ENCODE measurements at regions of chr18 and their contacts with region 1.

Region 1: DNA sequence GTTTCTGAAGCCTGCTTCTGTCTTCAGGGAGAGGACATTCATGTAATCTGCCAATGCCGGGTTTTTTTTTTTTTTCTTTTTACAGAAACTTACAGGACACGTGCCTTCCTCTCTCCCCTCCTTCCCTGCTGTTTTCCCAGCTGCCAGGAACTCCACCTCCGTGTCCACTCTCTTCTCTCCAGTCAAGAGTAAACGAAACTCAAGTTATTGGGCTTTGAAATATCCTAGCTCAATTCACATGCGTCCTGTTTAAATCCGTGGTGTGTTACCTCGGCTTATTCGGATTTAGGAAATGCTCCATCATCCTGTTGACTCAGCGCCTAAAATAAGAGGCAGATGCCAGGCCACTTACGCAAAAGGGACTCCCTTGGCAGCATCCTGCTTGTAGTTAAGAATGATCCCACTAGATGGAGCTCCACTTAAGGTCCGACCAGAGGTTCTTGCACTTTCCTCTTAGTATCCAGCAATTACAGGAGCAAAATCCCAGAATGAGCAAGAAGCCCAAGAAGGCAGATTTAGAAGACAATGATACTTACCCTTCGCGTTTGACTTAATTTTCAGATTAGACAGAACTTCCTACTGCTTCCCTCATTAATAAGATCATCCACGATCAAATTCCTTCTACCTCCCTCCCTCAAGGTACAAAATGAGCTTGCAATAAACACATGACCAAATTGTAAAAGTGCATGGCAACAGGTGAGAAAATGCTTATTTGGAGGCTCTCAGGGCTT is 97.2 kb upstream of the ZCCHC2 start:
- DNase-seq: peak in 8 of 9 donors; percentile 41 to 67 (median 57)
- ATAC-seq: peak; percentile 82
- H3K4me3 ChIP-seq: no peak overlapping the region
- H3K4me3 Mint-ChIP-seq: peak overlapping the region in 1 of 10 donors; percentile 52
- H3K27ac ChIP-seq: no peak overlapping the region
- H3K27ac Mint-ChIP-seq: peak overlapping the region in 5 of 9 donors; percentile 16 to 64 (median 39)
- H3K4me1 ChIP-seq: peaks cover 0 to 6% of the 10 kb centered on the region in 2 donors
- H3K4me1 Mint-ChIP-seq: peaks cover 11 to 54% (median 18%) of the 10 kb centered on the region in 7 donors
- H3K27me3 ChIP-seq: no peaks in the 10 kb centered on the region
- H3K27me3 Mint-ChIP-seq: peaks cover 0 to 4% (median 2%) of the 10 kb centered on the region in 5 donors

Region 2: GRCh38 chr18:62324917-62325805 is 100.5 kb before region 1 on chr18 and contains the start of gene TNFRSF11A:
- CTCF ChIA-PET with region 1: interaction called, 4 read pairs
- POLR2A ChIA-PET with region 1: no interaction called
- intact Hi-C with region 1: loop called in 1 of 2 experiments (anchors 1 kb)
- DNase-seq: peak; percentile 19 to 83 (median 46)
- ATAC-seq: peak; percentile 91
- H3K4me3 ChIP-seq: peak within 1 kb of the TSS; percentile 50
- H3K4me3 Mint-ChIP-seq: peak within 1 kb of the TSS; percentile 80 to 93 (median 84)
- H3K27ac ChIP-seq: no peak within 1 kb of the TSS
- H3K27ac Mint-ChIP-seq: peak within 1 kb of the TSS in 5 of 9 donors; percentile 15 to 73 (median 65)
- H3K4me1 ChIP-seq: peaks cover 14 to 17% of the 10 kb centered on the region in 2 donors
- H3K4me1 Mint-ChIP-seq: peaks cover 18 to 53% (median 34%) of the 10 kb centered on the region in 7 donors
- H3K27me3 ChIP-seq: peaks cover 12 to 20% of the 10 kb centered on the region in 2 donors
- H3K27me3 Mint-ChIP-seq: peaks cover 46 to 78% (median 70%) of the 10 kb centered on the region in 5 donors
- total RNA-seq, gene TNFRSF11A: 0.16 to 22.2 (median 0.68) TPM

Region 3: GRCh38 chr18:62396381-62396780 is 29.2 kb before region 1 on chr18:
- CTCF ChIA-PET with region 1: no interaction called
- POLR2A ChIA-PET with region 1: no interaction called
- intact Hi-C with region 1: loop called in 1 of 2 experiments (anchors 2 kb)
- DNase-seq: no peak
- ATAC-seq: no peak
- H3K4me3 ChIP-seq: no peak overlapping the region
- H3K4me3 Mint-ChIP-seq: no peak overlapping the region
- H3K27ac ChIP-seq: no peak overlapping the region
- H3K27ac Mint-ChIP-seq: no peak overlapping the region
- H3K4me1 ChIP-seq: no peaks in the 10 kb centered on the region
- H3K4me1 Mint-ChIP-seq: peaks cover 0 to 41% (median 0%) of the 10 kb centered on the region in 7 donors
- H3K27me3 ChIP-seq: no peaks in the 10 kb centered on the region
- H3K27me3 Mint-ChIP-seq: peaks cover 0 to 4% (median 0%) of the 10 kb centered on the region in 5 donors

Region 4: DNA sequence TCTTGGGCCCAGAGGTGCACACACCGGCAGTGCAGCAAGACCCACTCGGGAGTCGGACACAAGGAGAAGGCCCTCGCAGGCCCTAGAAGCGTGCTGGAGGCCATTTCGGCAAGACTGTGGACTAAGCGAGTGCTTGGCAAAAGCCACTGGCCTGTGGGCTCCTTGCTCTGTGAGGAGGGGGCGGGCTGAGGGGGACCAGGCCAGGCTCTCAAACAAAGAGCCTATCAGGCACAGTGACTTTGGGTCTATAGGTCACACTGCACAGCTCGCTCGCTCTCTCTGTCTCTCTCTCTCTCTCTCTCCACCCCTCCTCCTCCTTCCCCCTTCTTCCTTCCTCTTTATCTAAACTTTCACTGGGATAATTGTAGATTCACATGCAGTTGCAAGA is 73.6 kb after region 1 on chr18:
- CTCF ChIA-PET with region 1: no interaction called
- POLR2A ChIA-PET with region 1: no interaction called
- intact Hi-C with region 1: no loop called
- DNase-seq: no peak
- ATAC-seq: no peak
- H3K4me3 ChIP-seq: no peak overlapping the region
- H3K4me3 Mint-ChIP-seq: no peak overlapping the region
- H3K27ac ChIP-seq: no peak overlapping the region
- H3K27ac Mint-ChIP-seq: no peak overlapping the region
- H3K4me1 ChIP-seq: no peaks in the 10 kb centered on the region
- H3K4me1 Mint-ChIP-seq: peaks cover 0 to 7% (median 0%) of the 10 kb centered on the region in 7 donors
- H3K27me3 ChIP-seq: no peaks in the 10 kb centered on the region
- H3K27me3 Mint-ChIP-seq: peaks cover 0 to 26% (median 0%) of the 10 kb centered on the region in 5 donors

Region 5: DNA sequence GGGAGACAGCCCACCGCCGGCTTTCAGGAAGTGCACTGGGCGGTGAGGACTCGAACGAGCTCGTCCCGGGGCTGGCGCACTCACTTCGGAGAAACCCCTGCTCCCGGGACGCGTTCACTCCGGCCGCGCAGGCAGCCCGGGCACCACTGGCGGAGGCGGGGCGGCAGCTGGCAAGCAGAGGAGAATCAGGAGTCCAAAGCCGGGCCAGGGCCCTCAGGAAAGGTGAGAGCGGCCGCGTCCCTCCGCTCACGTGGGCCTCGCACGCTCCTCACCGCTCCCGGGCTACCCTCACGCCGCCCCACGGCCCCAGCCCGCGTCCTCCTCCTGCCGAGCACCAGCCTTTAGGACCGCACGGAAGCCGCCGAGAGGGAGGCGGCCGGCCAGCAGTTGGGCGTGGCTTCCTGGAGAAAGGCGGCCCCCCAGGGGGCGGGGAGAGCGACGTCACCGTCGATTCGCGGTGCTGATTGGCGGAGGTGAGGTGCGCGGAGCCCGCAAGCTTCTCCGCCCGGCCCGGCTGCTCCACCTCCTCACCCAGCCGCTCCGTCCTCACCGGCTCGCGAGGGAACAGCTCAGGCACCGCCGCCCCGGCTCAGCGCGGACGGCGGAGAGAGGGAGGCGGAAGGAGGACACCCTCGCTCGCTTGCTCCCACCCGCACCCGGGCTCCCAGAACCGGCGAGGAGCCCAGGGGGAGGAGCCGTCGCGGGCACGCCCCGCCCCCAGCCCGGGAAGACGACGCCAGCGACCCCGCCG is 97.0 kb after region 1 on chr18 and contains the start of gene ZCCHC2:
- CTCF ChIA-PET with region 1: interaction called, 13 read pairs
- POLR2A ChIA-PET with region 1: interaction called, 18 read pairs
- intact Hi-C with region 1: loop called (anchors 1 kb)
- DNase-seq: peak; percentile 96 to 100 (median 99)
- ATAC-seq: peak; percentile 88
- H3K4me3 ChIP-seq: peak within 1 kb of the TSS; percentile 81
- H3K4me3 Mint-ChIP-seq: peak within 1 kb of the TSS; percentile 91 to 98 (median 96)
- H3K27ac ChIP-seq: peak within 1 kb of the TSS; percentile 88
- H3K27ac Mint-ChIP-seq: peak within 1 kb of the TSS; percentile 62 to 97 (median 93)
- H3K4me1 ChIP-seq: peaks cover 23 to 26% of the 10 kb centered on the region in 2 donors
- H3K4me1 Mint-ChIP-seq: peaks cover 21 to 44% (median 37%) of the 10 kb centered on the region in 7 donors
- H3K27me3 ChIP-seq: no peaks in the 10 kb centered on the region
- H3K27me3 Mint-ChIP-seq: no peaks in the 10 kb centered on the region
- total RNA-seq, gene ZCCHC2: 51.1 to 68.5 (median 63.1) TPM

Region 6: DNA sequence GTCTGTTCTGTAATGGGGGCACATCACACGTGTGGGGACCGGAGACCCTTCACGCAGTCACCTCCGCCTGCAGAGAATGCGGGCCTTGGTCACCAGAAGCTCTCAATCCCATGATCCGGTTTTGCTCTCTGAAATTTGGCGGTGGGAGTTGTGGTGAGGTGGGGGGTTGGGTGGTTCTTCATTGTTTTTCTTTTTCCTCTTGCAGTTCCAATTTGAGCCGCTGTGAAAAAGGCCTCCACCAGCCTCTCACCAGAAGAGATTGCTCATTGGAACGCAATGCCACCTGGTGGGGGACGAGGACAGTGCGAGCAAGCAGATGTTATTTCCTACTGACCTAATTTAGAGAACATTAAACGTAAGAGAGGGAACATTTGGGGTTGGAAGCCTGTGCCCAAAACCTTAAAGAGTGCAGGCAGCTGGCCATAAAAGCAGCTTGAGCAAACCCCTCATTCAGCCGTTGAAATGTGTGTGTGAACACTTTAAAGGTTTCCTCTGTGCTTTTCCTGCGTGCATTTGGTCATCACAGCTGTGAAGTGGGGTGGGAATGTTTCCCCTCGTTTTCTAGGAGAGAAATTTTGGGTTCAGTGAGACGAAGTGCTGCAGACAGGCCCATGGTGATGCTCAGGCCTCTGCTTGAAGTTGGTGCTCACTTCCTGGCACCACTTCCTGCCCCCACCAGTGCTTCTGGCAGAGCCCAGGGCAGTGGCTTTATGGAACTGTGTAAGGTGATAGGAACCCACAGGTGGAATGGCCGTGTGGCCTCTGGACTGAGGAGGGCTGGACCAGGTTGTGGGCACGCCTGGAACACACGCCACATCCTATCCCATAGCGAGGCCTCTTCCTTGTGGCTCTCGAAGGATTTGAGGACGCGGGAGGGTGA is 158.9 kb after region 1 on chr18:
- CTCF ChIA-PET with region 1: interaction called, 16 read pairs
- POLR2A ChIA-PET with region 1: interaction called, 5 read pairs
- intact Hi-C with region 1: loop called (anchors 1 kb)
- DNase-seq: peak; percentile 61 to 85 (median 82)
- ATAC-seq: peak; percentile 99
- H3K4me3 ChIP-seq: no peak overlapping the region
- H3K4me3 Mint-ChIP-seq: peak overlapping the region; percentile 18 to 65 (median 58)
- H3K27ac ChIP-seq: no peak overlapping the region
- H3K27ac Mint-ChIP-seq: peak overlapping the region; percentile 26 to 83 (median 72)
- H3K4me1 ChIP-seq: peaks cover 18 to 22% of the 10 kb centered on the region in 2 donors
- H3K4me1 Mint-ChIP-seq: peaks cover 17 to 50% (median 32%) of the 10 kb centered on the region in 7 donors
- H3K27me3 ChIP-seq: no peaks in the 10 kb centered on the region
- H3K27me3 Mint-ChIP-seq: no peaks in the 10 kb centered on the region

Region 7: GRCh38 chr18:62982600-62983251 is 557.1 kb after region 1 on chr18:
- CTCF ChIA-PET with region 1: no interaction called
- POLR2A ChIA-PET with region 1: interaction called, 4 read pairs
- intact Hi-C with region 1: loop called (anchors 1 to 5 kb)
- DNase-seq: peak in 8 of 9 donors; percentile 29 to 60 (median 52)
- ATAC-seq: peak; percentile 70
- H3K4me3 ChIP-seq: peak overlapping the region; percentile 11
- H3K4me3 Mint-ChIP-seq: peak overlapping the region in 8 of 10 donors; percentile 33 to 78 (median 60)
- H3K27ac ChIP-seq: no peak overlapping the region
- H3K27ac Mint-ChIP-seq: peak overlapping the region in 1 of 9 donors; percentile 80
- H3K4me1 ChIP-seq: no peaks in the 10 kb centered on the region
- H3K4me1 Mint-ChIP-seq: peaks cover 0 to 7% (median 5%) of the 10 kb centered on the region in 7 donors
- H3K27me3 ChIP-seq: no peaks in the 10 kb centered on the region
- H3K27me3 Mint-ChIP-seq: peaks cover 0 to 2% (median 0%) of the 10 kb centered on the region in 5 donors